ENCODE measurements at regions of chr17 and their contacts with region 1.

Region 1: DNA sequence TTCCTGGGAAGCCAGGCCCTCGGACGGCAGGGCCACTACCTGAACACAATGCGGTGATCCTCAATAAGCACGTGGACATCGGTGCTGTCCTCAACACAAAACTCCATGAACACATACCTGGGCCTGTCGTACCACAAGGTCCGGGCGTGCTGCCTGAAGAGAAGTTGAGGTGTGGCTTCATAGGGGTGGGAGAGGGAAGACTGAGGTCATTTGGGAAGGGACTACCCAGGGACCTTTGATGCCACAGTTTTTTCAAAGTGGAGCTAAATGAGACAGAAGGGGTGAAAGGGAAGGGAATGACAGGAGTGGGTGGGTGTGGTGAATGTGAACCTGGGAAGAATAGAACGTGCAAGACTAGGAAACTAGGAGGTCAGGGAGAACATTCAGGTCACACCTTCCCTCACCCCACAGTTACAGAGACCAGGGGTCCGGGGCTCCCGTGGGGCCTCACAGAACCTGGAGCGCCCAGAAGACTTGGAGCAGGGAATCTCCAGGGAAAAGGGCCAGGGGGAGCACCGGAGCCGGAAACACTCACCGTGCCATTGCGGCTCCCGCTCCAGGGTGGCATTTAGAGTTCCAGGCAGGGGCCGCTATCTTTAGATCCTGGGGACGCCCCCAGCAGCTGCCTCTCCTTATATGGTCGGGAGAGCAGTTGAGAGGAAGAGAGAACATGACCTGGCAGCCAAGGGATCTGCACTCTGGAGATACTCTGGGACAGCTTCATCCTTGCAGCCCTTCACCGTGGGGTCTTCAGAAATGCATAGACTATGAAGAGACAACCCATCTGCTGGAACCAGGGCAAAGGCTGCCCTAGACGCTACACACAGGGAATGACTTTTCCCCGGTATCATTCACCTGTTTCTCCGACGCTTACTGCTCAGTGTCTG is at the start of gene PTGES3L:
- DNase-seq: no peak
- H3K4me3 ChIP-seq: peak within 1 kb of the TSS; percentile 65
- CTCF ChIP-seq: no peak

Region 2: GRCh38 chr17:43018008-43018853 is 38.5 kb after region 1 on chr17:
- in situ Hi-C with region 1: loop called (anchors 5 kb)
- DNase-seq: no peak
- H3K4me3 ChIP-seq: no peak overlapping the region
- CTCF ChIP-seq: no peak

Region 3: GRCh38 chr17:43033948-43034881 is 54.5 kb after region 1 on chr17:
- in situ Hi-C with region 1: no loop called
- DNase-seq: no peak
- H3K4me3 ChIP-seq: no peak overlapping the region
- CTCF ChIP-seq: no peak

Measured in astrocyte of the cerebellum (primary cell).